GM18951 (cell line): ENCODE measurements at regions of chr6 and their contacts with region 1.

Region 1: DNA sequence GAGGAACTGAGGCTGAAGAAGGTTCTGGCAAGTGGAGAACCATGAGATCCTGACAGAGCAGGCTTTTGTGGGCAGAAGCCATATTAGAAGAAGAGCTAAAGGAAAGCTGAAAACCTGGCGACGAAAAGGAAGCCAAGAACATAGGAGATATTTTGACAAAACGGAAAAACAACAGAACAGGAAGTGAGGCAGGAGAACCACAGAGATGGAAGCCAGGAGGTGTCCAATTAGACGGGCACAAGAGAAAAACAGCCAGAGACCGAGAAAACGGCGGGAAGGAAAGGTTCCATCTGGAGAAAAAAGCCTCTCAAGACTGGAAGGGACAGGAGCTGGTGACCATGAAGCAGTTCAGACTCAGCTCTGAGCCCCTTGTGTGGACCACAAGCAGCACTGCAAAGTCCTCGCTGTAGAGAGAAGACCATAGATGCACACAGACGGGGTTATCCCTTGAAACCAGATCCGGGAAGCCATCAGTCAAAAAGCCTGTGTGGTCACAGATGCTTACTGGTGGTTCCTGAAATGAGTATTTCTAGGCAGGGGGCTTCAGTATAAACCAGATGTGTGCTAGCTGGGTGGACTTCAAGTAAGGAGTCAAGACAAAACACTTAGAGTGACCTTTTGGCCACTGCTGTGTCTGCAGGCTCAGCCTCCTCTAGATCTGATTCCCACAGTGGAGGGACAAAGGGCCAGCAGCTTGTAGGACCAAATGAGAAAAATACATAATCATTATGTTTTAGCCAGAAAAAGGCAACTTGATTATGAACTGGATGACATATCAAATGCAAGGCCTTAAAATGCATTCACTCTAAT is 30.7 kb downstream of the SSR1 start:
- POLR2A ChIP-seq: peak; percentile 28

Region 2: DNA sequence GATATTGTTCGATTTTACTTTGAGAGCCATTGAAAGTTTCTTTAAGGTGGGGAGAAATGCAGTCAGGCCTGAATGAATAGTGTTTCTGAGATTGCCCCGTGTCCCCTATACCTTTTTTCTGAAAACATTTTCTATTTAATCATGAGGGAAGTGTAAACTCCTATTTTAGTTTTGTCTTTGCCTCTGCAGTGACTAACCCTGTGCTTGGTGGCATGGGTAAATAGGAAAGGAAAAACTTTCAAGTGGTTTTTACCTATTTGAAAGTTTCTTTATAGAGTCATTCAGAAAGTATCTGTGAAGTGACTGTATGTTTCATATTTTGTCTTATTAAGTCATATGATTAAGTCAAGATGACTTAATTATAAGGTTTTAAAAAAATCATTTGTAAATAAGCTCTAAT is 322.2 kb after region 1 on chr6:
- in situ Hi-C with region 1: loop called (anchors 10 kb)
- POLR2A ChIP-seq: no peak

Region 3: GRCh38 chr6:8006208-8006607 is 723.9 kb after region 1 on chr6:
- in situ Hi-C with region 1: loop called (anchors 25 kb)
- POLR2A ChIP-seq: no peak